ENCODE measurements at regions of chr5 and their contacts with region 1.

Region 1: DNA sequence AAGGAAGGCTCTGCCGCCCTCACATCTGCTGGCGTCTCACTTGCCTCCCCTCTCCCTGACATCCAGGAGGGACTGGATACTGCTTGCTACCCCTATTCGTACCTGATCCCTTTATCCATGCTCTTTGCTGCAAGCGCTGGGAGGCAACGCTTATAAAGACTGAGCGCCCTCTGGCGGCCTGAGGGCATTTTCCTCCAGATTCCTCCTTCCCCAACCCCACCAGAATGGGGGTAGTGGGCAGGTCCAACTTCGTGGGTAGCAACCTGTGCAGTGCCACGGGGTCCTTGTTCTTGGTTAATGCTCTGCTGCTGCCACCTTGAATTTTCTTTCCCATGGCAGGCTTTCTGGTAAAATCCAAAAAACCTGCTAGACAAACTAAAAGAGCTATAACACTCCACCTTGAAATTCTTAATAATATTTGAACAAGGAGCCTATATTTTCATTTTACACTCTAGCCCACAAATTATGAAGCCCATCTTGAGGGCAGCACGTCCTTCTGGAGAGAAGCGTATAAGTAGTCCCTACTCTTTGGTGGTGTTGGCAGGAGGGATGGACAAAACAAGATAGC is 52.4 kb downstream of the JADE2 start:
- DNase-seq: peak; percentile 87
- H3K4me3 Mint-ChIP-seq: no peak overlapping the region
- H3K27ac Mint-ChIP-seq: peak overlapping the region; percentile 63
- H3K4me1 Mint-ChIP-seq: peaks cover 8% of the 10 kb centered on the region
- H3K27me3 Mint-ChIP-seq: no peaks in the 10 kb centered on the region

Region 2: DNA sequence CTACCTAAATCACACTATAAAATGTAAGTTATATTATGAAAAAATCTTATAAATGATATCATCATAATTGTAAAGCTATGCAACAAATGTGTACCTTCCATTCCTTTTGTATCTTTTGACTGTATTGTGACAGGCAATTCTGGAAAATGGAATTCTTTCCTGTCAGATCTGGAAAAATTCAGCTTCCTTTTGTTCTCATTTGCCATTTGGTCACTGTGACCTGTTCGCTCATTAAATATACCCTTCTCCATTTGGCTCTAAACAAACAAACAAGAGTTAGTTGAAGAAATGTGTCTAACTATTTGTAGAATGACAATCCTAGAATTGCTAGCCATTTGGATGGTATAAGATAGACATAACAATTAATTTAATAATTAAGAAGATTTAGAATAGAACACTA is 273.6 kb before region 1 on chr5:
- CTCF ChIA-PET with region 1: interaction called, 21 read pairs
- POLR2A ChIA-PET with region 1: no interaction called
- intact Hi-C with region 1: loop called (anchors 1 kb)
- DNase-seq: no peak
- H3K4me3 Mint-ChIP-seq: no peak overlapping the region
- H3K27ac Mint-ChIP-seq: no peak overlapping the region
- H3K4me1 Mint-ChIP-seq: peaks cover 2% of the 10 kb centered on the region
- H3K27me3 Mint-ChIP-seq: no peaks in the 10 kb centered on the region

Region 3: DNA sequence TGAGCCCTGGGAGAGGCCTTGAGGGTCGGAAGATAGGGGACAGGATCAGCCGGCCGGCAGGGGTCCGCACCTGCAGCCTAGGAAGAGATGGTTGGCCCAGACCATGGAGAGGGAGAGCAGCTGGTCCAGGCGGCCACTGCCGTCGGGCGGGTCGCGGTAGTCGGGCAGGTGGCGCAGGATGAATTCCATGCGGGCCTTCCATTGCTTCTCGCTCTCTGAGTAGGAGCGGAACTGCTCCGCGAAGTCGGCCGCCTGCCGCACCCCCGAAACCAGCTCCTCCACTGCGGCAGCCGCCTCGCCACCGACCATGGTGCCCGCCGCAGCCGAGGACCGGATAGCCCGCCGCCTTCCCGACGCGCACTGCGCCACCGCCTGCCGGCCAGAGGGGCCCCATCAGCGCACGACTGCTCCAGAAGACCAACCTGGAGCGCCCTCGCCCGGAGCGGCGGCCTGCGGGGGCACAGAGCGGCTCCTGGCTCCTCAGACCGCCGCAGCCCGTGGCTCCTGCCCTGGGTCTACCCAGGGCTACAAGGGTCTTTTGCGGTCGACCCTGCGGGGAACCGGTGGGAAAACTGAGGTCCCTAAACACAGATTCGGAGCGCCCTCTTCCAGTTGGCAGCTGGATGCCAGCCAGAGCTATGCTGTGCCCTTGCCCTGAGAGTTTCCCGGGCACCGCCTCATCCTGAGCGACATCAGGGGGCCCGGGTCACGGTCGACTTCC is 166.2 kb before region 1 on chr5 and contains the start of gene CDKN2AIPNL:
- CTCF ChIA-PET with region 1: interaction called, 22 read pairs
- POLR2A ChIA-PET with region 1: no interaction called
- intact Hi-C with region 1: no loop called
- DNase-seq: peak; percentile 94
- H3K4me3 Mint-ChIP-seq: peak within 1 kb of the TSS; percentile 87
- H3K27ac Mint-ChIP-seq: peak within 1 kb of the TSS; percentile 73
- H3K4me1 Mint-ChIP-seq: peaks cover 31% of the 10 kb centered on the region
- H3K27me3 Mint-ChIP-seq: no peaks in the 10 kb centered on the region
- total RNA-seq, gene CDKN2AIPNL: 32.0 to 33.3 TPM

Measured in activated CD4-positive, alpha-beta memory T cell treated with anti-CD3 and anti-CD28 coated beads for 36 hours (primary cell).